Activated CD8-positive, alpha-beta memory T cell treated with anti-CD3 and anti-CD28 coated beads, Interleukin-2, amount 10 ng/mL, durations not matched to agents 7 days and 5 days (primary cell): ENCODE measurements at regions of chr20 and their contacts with region 1.

Region 1: GRCh38 chr20:8043687-8044282 is 24.2 kb upstream of the TMX4 start:
- DNase-seq: no peak
- ATAC-seq: peak; percentile 64
- H3K4me3 Mint-ChIP-seq: no peak overlapping the region
- H3K27ac Mint-ChIP-seq: no peak overlapping the region
- H3K4me1 Mint-ChIP-seq: peaks cover 2% of the 10 kb centered on the region
- H3K27me3 Mint-ChIP-seq: peaks cover 23% of the 10 kb centered on the region

Region 2: GRCh38 chr20:7935027-7935551 is 108.7 kb before region 1 on chr20:
- CTCF ChIA-PET with region 1: interaction called, 13 read pairs
- DNase-seq: no peak
- ATAC-seq: no peak
- H3K4me3 Mint-ChIP-seq: no peak overlapping the region
- H3K27ac Mint-ChIP-seq: no peak overlapping the region
- H3K4me1 Mint-ChIP-seq: no peaks in the 10 kb centered on the region
- H3K27me3 Mint-ChIP-seq: peaks cover 13% of the 10 kb centered on the region

Region 3: DNA sequence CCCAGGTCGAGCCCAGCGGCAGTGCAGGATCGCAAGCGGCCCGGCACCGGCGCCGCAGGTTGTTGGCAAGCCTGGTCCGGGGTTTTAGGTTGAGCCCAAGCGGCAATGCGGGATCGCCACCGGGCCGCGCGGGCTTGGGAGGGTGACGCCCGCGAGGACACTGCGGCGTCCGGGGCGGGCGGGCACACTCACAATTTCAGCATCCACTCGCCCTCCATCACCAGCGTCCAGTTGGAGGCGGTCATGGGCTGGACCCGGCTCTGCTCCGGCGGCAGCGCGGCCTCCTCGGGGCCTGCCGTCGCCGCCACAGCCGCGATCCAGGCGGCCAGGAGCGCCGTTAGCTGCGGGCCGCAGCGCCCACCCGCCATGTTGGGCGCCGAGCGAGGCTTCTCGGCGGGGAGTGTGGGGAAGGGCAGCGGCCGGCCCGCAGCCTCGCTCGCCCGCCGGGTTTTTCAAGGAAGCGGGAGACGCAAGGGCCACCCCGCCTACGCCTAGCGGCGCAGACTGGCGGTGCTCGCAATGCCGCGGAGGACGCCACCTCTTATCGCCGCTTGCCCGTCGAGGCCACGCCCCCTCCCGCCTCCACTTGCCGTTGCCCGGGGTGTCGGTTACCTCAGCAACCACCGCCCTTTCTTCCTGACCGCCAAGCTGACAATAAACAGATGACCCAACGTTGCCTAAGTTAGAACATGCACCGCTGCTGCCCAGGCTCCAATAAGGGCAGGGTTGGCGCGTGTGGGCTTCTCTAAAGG is 24.4 kb before region 1 on chr20 and contains the start of gene TMX4:
- CTCF ChIA-PET with region 1: interaction called, 15 read pairs
- DNase-seq: peak; percentile 96
- ATAC-seq: peak; percentile 86
- H3K4me3 Mint-ChIP-seq: peak within 1 kb of the TSS; percentile 81
- H3K27ac Mint-ChIP-seq: peak within 1 kb of the TSS; percentile 86
- H3K4me1 Mint-ChIP-seq: peaks cover 18% of the 10 kb centered on the region
- H3K27me3 Mint-ChIP-seq: no peaks in the 10 kb centered on the region
- total RNA-seq, gene TMX4: 46.1 to 48.2 TPM

Region 4: DNA sequence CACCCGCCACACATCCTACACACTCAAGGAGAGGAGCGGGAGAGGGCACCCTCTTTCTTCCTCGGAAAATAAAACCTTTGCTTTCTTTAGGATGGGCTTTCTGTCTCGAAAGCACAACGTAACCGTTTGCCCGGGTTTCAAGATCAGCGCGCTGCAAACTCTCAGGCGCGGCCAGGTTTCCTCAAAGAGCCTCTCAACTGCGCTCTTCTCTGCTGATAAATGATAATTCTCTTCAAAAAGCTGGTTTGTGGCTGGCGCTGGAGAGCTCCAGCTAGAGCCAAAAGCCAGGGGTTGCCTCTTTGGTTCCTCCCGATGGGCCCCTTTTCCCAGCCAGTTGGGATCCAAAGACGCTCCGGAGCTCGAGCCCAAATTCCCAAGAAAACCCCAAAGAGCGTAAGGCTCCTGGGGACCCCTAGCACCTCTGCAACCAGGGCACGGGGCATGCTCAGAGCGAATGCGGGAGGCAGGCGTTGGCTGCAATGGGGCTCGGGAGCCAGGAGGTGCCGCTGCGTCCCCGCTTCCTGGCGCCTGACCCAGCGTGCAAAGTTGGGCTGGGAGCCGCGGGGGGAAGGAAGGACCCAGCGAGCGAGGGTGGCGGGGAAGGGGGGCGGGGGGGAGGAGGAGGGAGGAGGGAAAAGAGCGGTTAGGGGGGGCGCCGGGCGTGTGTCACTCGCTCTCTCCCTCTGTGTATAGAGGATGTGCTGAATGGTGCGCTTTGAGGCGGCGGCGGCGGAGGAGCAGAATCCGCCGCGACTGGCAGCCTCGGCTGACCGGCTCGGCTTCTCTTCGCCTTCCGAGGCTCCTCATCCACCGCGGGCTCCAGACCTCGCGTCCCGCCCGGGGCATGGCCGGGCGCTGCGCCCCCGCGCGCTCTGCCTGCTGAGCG is 88.1 kb after region 1 on chr20 and contains the start of gene PLCB1:
- CTCF ChIA-PET with region 1: interaction called, 11 read pairs
- DNase-seq: peak; percentile 85
- ATAC-seq: peak; percentile 95
- H3K4me3 Mint-ChIP-seq: peak within 1 kb of the TSS; percentile 66
- H3K27ac Mint-ChIP-seq: no peak within 1 kb of the TSS
- H3K4me1 Mint-ChIP-seq: peaks cover 33% of the 10 kb centered on the region
- H3K27me3 Mint-ChIP-seq: peaks cover 59% of the 10 kb centered on the region
- total RNA-seq, gene PLCB1: 2.4 to 3.2 TPM

Region 5: GRCh38 chr20:8153281-8153908 is 109.6 kb after region 1 on chr20:
- CTCF ChIA-PET with region 1: no interaction called
- DNase-seq: no peak
- ATAC-seq: no peak
- H3K4me3 Mint-ChIP-seq: no peak overlapping the region
- H3K27ac Mint-ChIP-seq: peak overlapping the region; percentile 35
- H3K4me1 Mint-ChIP-seq: peaks cover 56% of the 10 kb centered on the region
- H3K27me3 Mint-ChIP-seq: no peaks in the 10 kb centered on the region

Region 6: GRCh38 chr20:8389381-8390036 is 345.7 kb after region 1 on chr20:
- CTCF ChIA-PET with region 1: interaction called, 20 read pairs
- DNase-seq: no peak
- ATAC-seq: no peak
- H3K4me3 Mint-ChIP-seq: no peak overlapping the region
- H3K27ac Mint-ChIP-seq: no peak overlapping the region
- H3K4me1 Mint-ChIP-seq: peaks cover 12% of the 10 kb centered on the region
- H3K27me3 Mint-ChIP-seq: no peaks in the 10 kb centered on the region